A549 (cell line): ENCODE measurements at regions of chr16 and their contacts with region 1.

Region 1: DNA sequence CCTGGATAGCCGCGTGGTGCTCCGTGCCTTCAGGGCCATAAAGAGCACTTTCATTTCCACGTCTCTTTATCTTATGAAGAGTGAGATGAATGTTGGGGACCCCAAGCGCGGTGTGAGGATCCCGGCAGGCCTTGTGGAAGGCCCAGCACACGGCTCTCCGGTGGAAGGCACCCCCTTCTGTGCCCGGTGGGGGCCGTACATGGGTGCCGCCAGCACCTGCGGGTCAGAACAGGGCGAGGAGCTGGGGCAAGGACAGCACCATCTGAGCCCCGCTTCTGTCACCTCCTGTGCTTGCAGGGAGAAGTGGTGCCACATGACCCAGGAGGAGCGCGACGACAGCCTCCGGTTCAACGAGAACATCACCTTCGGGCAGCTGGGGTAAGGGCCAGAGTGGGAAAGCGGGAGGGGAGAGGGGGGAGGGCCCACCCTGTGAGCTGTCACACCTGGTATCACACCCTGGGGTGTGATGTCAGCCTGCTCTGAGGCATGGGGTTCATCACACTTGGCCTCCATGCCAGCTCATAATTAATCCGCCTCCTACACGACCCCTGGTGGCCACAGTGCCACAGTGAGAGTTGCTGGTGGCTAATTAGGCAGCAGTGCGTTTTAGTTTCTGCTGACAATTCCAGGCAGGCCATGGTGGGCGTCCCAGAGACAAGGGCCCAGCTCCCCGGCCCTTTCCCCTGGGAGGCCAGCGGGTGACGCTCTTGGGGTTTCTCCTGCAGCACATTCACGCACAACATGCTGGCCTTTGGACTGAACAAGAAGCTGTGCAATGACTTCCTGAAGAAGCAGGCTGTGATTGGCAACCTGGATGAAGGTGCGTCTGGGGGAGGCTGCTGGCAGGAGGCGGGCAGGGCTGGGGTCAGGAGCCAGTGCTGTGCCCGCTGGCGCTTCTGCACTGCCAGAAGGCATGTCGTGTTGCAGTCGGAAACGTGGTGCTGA is 25.7 kb downstream of the CIBAR2 start:
- DNase-seq: peak; percentile 70 to 95
- ATAC-seq: peak; percentile 75 to 91
- H3K4me3 ChIP-seq: no peak overlapping the region
- H3K27ac ChIP-seq: peak overlapping the region; percentile 41 to 71; a peak in 4 of 6 replicates
- H3K4me1 ChIP-seq: peaks cover 4% of the 10 kb centered on the region; the same call in 2 of the 3 replicates
- CTCF ChIP-seq: peak; percentile 74
- EP300 ChIP-seq: no peak
- POLR2A ChIP-seq: no peak
- RAD21 ChIP-seq: peak; percentile 76 to 80

Region 2: GRCh38 chr16:84925092-84925772 is 161.4 kb before region 1 on chr16:
- CTCF ChIA-PET with region 1: interaction called, 18 read pairs
- POLR2A ChIA-PET with region 1: no interaction called
- DNase-seq: peak; percentile 48 to 60
- ATAC-seq: peak; percentile 67 to 90; a peak in 5 of 6 replicates
- H3K4me3 ChIP-seq: no peak overlapping the region
- H3K27ac ChIP-seq: no peak overlapping the region
- H3K4me1 ChIP-seq: peaks cover 5% of the 10 kb centered on the region; the same call in 1 of the 3 replicates
- CTCF ChIP-seq: peak; percentile 86
- EP300 ChIP-seq: no peak
- POLR2A ChIP-seq: no peak
- RAD21 ChIP-seq: peak; percentile 81 to 82

Region 3: DNA sequence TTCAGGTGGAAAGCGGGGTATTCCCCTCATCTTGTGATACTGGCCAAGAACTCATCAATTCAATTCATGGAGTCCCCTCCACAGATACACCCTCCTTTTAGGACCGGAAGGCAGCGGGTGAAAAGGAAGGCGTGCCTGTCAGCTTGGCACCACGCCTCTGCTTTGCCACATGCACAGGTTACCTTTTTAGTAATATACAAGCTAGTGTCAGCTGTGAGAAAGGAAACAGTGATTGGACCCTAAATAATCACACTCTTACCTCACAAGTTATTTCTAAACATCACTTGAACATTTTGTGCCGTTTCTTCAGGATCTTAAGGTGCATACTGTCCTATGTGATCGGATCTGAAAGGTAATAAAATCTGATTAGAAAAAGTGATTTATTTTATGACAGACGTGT is 91.0 kb before region 1 on chr16:
- CTCF ChIA-PET with region 1: interaction called, 22 read pairs
- POLR2A ChIA-PET with region 1: no interaction called
- DNase-seq: no peak
- ATAC-seq: no peak
- H3K4me3 ChIP-seq: peak overlapping the region; percentile 15; the same call in 1 of the 3 replicates
- H3K27ac ChIP-seq: peak overlapping the region; percentile 94 to 96
- H3K4me1 ChIP-seq: peaks cover 71% of the 10 kb centered on the region
- CTCF ChIP-seq: no peak
- EP300 ChIP-seq: no peak
- POLR2A ChIP-seq: no peak
- RAD21 ChIP-seq: no peak

Region 4: DNA sequence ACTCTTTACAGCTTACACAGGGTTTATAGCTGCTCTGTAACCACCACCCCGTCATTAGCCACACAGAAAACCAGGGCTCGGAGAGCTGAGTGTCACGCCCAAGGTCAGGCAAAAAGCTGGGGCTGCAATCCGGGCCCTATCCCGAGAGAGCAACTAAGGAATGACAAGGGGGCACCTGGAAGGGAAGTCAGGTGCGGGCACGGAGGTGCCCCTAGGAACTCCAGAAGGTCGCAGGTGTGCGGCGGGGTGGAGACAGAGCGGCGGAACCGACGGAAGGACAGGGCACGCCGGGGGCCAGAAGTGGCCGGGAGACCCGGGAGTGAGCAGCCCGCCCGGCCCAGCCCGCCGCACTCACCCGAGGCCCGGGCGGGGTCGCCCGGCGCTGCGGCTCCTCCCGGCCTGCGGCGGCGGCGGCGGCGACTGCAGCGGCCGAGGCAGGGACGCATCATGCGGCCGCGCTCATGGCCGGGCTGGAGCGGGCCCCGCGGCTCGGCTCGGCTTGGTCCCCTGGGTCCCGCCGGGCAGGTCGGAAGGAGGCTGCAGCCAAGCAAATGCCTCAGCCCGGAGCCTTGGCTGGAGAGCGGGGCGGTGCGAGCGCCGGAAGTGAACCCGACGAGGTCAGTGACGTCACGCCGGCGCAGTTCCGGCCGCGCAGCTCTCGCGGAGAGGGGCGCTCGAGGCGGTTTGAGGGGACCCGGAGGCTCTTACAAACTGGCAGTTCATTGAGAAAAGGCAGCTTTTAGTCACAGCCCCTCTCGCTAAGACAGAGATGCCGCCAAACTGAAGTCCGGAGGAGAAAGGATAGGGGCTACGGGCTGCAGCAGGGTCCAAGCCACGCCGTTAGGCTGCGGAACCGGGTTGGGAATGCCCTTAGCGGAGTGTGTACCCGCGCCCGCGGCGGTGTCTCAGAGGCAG is 75.4 kb before region 1 on chr16 and contains the start of gene ZDHHC7:
- CTCF ChIA-PET with region 1: interaction called, 21 read pairs
- POLR2A ChIA-PET with region 1: interaction called, 7 read pairs
- DNase-seq: peak; percentile 85 to 88
- ATAC-seq: peak; percentile 96 to 98
- H3K4me3 ChIP-seq: peak within 1 kb of the TSS; percentile 87
- H3K27ac ChIP-seq: peak within 1 kb of the TSS; percentile 99
- H3K4me1 ChIP-seq: peaks cover 32% of the 10 kb centered on the region
- CTCF ChIP-seq: no peak
- EP300 ChIP-seq: 0 out of 5 replicates have a peak, but pooled peaks of 1 of the 2 experiments have one; percentile 20
- POLR2A ChIP-seq: peak; percentile 89
- RAD21 ChIP-seq: peak in 1 of 2 experiments; percentile 22; a peak in 2 of 5 replicates
- polyA plus RNA-seq, gene ZDHHC7: 58.0 and 88.6 TPM in 2 replicates

Region 5: GRCh38 chr16:85055503-85056210 is 31.0 kb before region 1 on chr16:
- CTCF ChIA-PET with region 1: interaction called, 14 read pairs
- POLR2A ChIA-PET with region 1: no interaction called
- DNase-seq: no peak
- ATAC-seq: peak in 1 of 2 experiments; percentile 27; a peak in 2 of 6 replicates
- H3K4me3 ChIP-seq: no peak overlapping the region
- H3K27ac ChIP-seq: no peak overlapping the region; a peak in 1 of 6 replicates
- H3K4me1 ChIP-seq: no peaks in the 10 kb centered on the region; the same call in 2 of the 3 replicates
- CTCF ChIP-seq: no peak
- EP300 ChIP-seq: no peak
- POLR2A ChIP-seq: no peak
- RAD21 ChIP-seq: no peak

Region 6: GRCh38 chr16:85072947-85073346 is 13.7 kb before region 1 on chr16:
- CTCF ChIA-PET with region 1: interaction called, 30 read pairs
- POLR2A ChIA-PET with region 1: no interaction called
- DNase-seq: no peak
- ATAC-seq: no peak
- H3K4me3 ChIP-seq: no peak overlapping the region
- H3K27ac ChIP-seq: no peak overlapping the region
- H3K4me1 ChIP-seq: no peaks in the 10 kb centered on the region
- CTCF ChIP-seq: no peak
- EP300 ChIP-seq: no peak
- POLR2A ChIP-seq: no peak
- RAD21 ChIP-seq: no peak

Region 7: GRCh38 chr16:85104821-85105391 is 18.3 kb after region 1 on chr16:
- CTCF ChIA-PET with region 1: interaction called, 12 read pairs
- POLR2A ChIA-PET with region 1: no interaction called
- DNase-seq: no peak
- ATAC-seq: peak; percentile 35 to 56; a peak in 5 of 6 replicates
- H3K4me3 ChIP-seq: no peak overlapping the region
- H3K27ac ChIP-seq: no peak overlapping the region
- H3K4me1 ChIP-seq: no peaks in the 10 kb centered on the region
- CTCF ChIP-seq: no peak
- EP300 ChIP-seq: no peak
- POLR2A ChIP-seq: no peak
- RAD21 ChIP-seq: no peak

Region 8: GRCh38 chr16:85172455-85173145 is 86.0 kb after region 1 on chr16:
- CTCF ChIA-PET with region 1: no interaction called
- POLR2A ChIA-PET with region 1: no interaction called
- DNase-seq: peak; percentile 62 to 66
- ATAC-seq: peak in 1 of 2 experiments; percentile 58; a peak in 3 of 6 replicates
- H3K4me3 ChIP-seq: no peak overlapping the region
- H3K27ac ChIP-seq: peak overlapping the region; percentile 18 to 87; a peak in 5 of 6 replicates
- H3K4me1 ChIP-seq: peaks cover 55% of the 10 kb centered on the region
- CTCF ChIP-seq: peak; percentile 9; the same call in 1 of the 3 replicates
- EP300 ChIP-seq: no peak
- POLR2A ChIP-seq: no peak
- RAD21 ChIP-seq: no peak